ENCODE measurements at regions of chr10 and their contacts with region 1.

Region 1: DNA sequence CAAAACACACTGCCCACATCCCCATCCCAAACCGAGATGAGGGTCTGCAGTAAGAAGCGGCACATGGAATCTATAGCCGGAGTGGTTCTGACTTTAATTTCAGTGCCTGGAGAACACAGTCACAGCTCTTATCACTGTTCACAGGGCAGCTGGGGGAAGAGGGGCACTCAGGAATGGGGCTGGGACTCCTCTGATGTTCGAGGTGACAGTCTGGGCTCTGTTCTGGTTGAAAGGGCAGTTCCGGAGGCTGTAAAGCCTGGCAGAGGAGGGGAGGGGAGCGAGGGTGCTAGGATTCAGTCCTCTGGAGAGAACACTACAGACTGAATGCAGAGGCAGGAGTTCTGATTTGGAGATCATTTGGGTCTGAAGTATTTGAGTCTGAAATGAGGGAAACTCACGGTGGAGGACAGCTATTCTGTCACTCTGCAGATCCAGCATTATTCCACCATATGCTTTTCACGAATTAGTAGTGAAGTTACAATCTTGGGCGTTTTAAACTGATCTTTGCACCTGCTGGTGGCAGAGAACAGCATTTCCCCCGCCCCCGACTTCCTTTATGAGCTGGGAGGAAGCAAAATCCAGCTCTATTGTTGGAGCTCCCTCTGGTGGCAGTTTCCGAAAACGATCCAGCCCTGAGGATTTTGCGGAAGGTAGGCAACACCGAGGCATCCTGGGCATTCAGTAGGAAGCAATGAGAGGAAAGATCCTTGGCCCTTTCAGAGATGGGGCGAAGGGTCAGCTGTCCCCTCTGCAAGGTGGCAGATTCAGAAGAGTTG is 22.7 kb upstream of the KCNK18 start:
- DNase-seq: peak; percentile 80 to 91
- ATAC-seq: peak; percentile 84 to 93
- H3K4me3 ChIP-seq: peak overlapping the region; percentile 55
- H3K27ac ChIP-seq: peak overlapping the region in 1 of 2 experiments; percentile 59; a peak in 3 of 6 replicates
- H3K4me1 ChIP-seq: 0 out of 3 replicates have a peak, but pooled peaks cover 4% of the 10 kb centered on the region
- CTCF ChIP-seq: peak; percentile 89
- EP300 ChIP-seq: no peak
- POLR2A ChIP-seq: no peak
- RAD21 ChIP-seq: peak; percentile 88 to 93

Region 2: GRCh38 chr10:116742367-116743265 is 432.0 kb before region 1 on chr10 and contains the start of gene HSPA12A:
- CTCF ChIA-PET with region 1: interaction called, 12 read pairs
- POLR2A ChIA-PET with region 1: interaction called, 4 read pairs
- DNase-seq: peak; percentile 76 to 78
- ATAC-seq: peak; percentile 85 to 89
- H3K4me3 ChIP-seq: peak within 1 kb of the TSS; percentile 81
- H3K27ac ChIP-seq: peak within 1 kb of the TSS; percentile 90 to 98
- H3K4me1 ChIP-seq: peaks cover 12% of the 10 kb centered on the region
- CTCF ChIP-seq: no peak
- EP300 ChIP-seq: no peak
- POLR2A ChIP-seq: peak; percentile 94
- RAD21 ChIP-seq: no peak
- polyA plus RNA-seq, gene HSPA12A: 17.0 and 17.4 TPM in 2 replicates

Region 3: DNA sequence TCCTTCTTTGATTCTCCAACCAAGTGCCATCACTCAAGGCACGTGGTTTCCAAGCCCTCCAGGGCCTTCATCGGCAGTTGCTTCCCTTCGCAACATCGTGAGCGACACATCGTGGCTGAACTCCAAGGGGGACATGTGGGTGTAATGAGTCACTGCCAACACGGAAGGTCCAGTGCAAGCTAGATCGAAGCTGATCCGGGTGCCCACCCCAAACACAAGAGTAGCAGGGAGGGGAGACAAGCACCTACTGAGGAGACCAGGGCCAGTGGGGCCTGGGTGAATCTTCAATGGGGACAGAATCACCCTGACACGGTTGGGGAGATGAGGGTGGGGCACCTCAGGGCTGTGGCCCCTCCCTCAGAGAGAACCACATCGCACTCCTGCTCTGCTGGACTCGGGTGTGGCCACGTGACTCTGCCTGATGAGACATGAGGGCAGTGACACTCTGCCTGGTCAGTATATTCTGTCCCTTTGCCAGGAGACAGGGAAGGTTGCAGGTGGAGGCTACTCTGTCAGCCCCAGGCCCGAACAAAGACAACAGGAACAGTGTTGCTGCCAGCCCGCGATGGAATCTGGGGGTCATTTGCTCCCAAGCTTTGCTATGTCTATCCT is 395.4 kb before region 1 on chr10:
- CTCF ChIA-PET with region 1: interaction called, 1,061 read pairs
- POLR2A ChIA-PET with region 1: no interaction called
- DNase-seq: no peak
- ATAC-seq: no peak
- H3K4me3 ChIP-seq: no peak overlapping the region
- H3K27ac ChIP-seq: peak overlapping the region in 1 of 2 experiments; percentile 31; a peak in 1 of 6 replicates
- H3K4me1 ChIP-seq: peaks cover 11% of the 10 kb centered on the region
- CTCF ChIP-seq: no peak
- EP300 ChIP-seq: no peak
- POLR2A ChIP-seq: no peak
- RAD21 ChIP-seq: no peak

Region 4: GRCh38 chr10:116836902-116837523 is 337.6 kb before region 1 on chr10:
- CTCF ChIA-PET with region 1: interaction called, 11 read pairs
- POLR2A ChIA-PET with region 1: no interaction called
- DNase-seq: no peak
- ATAC-seq: no peak
- H3K4me3 ChIP-seq: no peak overlapping the region
- H3K27ac ChIP-seq: no peak overlapping the region
- H3K4me1 ChIP-seq: peaks cover 13% of the 10 kb centered on the region; the same call in 1 of the 3 replicates
- CTCF ChIP-seq: no peak; the same call in 1 of the 3 replicates
- EP300 ChIP-seq: no peak
- POLR2A ChIP-seq: no peak
- RAD21 ChIP-seq: peak in 1 of 2 experiments; percentile 48; a peak in 4 of 5 replicates

Region 5: GRCh38 chr10:117152668-117153067 is 22.0 kb before region 1 on chr10:
- CTCF ChIA-PET with region 1: interaction called, 21 read pairs
- POLR2A ChIA-PET with region 1: no interaction called
- DNase-seq: no peak
- ATAC-seq: peak; percentile 37 to 53; a peak in 2 of 6 replicates
- H3K4me3 ChIP-seq: no peak overlapping the region
- H3K27ac ChIP-seq: no peak overlapping the region
- H3K4me1 ChIP-seq: no peaks in the 10 kb centered on the region
- CTCF ChIP-seq: no peak
- EP300 ChIP-seq: no peak
- POLR2A ChIP-seq: no peak
- RAD21 ChIP-seq: no peak

Region 6: GRCh38 chr10:117198088-117198487 is 23.5 kb after region 1 on chr10:
- CTCF ChIA-PET with region 1: interaction called, 23 read pairs
- POLR2A ChIA-PET with region 1: no interaction called
- DNase-seq: no peak
- ATAC-seq: no peak
- H3K4me3 ChIP-seq: no peak overlapping the region
- H3K27ac ChIP-seq: no peak overlapping the region
- H3K4me1 ChIP-seq: no peaks in the 10 kb centered on the region
- CTCF ChIP-seq: no peak
- EP300 ChIP-seq: no peak
- POLR2A ChIP-seq: no peak
- RAD21 ChIP-seq: no peak

Region 7: DNA sequence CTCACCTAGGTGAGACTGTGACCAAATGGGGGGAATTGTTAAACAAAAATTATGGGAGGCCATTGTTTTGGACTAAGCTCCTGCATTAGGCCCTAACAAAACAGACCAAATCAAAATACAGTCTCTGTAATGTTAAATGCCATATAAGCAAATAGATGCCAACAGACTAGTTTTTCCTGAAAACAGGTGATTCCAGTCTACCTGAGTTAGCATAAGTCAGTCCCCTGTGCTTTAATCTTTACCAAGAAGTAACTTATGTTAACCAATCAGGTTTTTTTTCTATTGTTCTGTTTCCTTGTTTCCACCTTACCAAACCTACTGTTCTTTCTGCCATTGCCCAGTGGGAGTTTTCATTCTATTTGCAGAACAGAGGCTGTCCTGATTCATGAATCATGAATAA is 152.6 kb after region 1 on chr10:
- CTCF ChIA-PET with region 1: no interaction called
- POLR2A ChIA-PET with region 1: no interaction called
- DNase-seq: no peak
- ATAC-seq: no peak
- H3K4me3 ChIP-seq: no peak overlapping the region
- H3K27ac ChIP-seq: no peak overlapping the region
- H3K4me1 ChIP-seq: peaks cover 37% of the 10 kb centered on the region; the same call in 2 of the 3 replicates
- CTCF ChIP-seq: no peak
- EP300 ChIP-seq: no peak
- POLR2A ChIP-seq: no peak
- RAD21 ChIP-seq: no peak

Measured in A549 (cell line).